A673 (cell line): ENCODE measurements at regions of chr14 and their contacts with region 1.

Region 1: GRCh38 chr14:95265106-95266094 is 54.3 kb downstream of the CLMN start:
- DNase-seq: peak; percentile 95
- H3K4me3 ChIP-seq: peak overlapping the region; percentile 9
- H3K27ac ChIP-seq: peak overlapping the region; percentile 88
- H3K4me1 ChIP-seq: peaks cover 52% of the 10 kb centered on the region
- H3K27me3 ChIP-seq: no peaks in the 10 kb centered on the region
- CTCF ChIP-seq: no peak

Region 2: DNA sequence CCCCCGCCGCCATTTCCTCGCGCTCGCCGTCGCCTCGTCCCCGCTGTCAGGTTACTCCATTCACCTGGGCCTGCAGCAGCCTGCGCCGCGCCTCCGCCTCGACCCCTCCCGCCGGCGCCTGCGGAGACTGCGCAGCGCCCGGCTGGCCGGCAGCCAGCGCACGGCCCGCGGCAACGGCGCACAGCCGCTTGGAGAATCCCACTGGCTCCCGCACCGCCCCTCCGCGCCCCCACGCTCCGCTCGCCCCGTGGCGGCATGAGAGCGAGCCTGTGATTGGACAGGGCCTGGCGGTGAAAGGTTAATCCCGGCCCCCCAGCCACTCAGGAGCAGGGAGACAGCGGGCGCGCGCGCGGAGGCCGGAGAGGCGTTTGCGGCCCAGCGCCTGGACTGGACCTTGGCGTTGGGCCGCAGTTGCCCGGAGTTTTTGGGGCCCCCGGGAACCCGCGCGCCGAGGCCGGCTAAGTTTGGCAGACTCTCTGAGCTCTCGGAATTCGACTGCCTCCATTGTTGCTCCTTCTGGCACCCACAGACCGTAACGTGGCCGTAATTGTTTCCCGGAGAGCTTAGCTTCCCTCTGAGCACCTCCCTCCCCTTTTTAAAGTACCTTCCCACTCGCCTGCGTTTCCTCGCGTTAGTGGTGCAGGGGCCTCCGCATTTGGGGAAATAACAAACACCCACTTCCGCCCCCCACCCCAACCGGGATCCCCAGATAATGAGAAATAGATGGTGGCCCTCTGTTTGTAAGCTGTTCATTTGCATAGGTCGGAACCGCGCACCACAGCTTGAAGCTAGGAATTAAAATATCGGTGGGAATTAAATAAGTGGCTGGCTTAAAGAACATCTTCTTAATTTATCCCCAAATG is 107.8 kb before region 1 on chr14 and contains the start of gene DICER1:
- CTCF ChIA-PET with region 1: no interaction called
- POLR2A ChIA-PET with region 1: no interaction called
- intact Hi-C with region 1: loop called (anchors 10 kb)
- DNase-seq: peak; percentile 95
- H3K4me3 ChIP-seq: peak within 1 kb of the TSS; percentile 59
- H3K27ac ChIP-seq: peak within 1 kb of the TSS; percentile 92
- H3K4me1 ChIP-seq: peaks cover 19% of the 10 kb centered on the region
- H3K27me3 ChIP-seq: no peaks in the 10 kb centered on the region
- CTCF ChIP-seq: no peak
- total RNA-seq, gene DICER1: 57.1 and 62.6 TPM in 2 replicates

Region 3: DNA sequence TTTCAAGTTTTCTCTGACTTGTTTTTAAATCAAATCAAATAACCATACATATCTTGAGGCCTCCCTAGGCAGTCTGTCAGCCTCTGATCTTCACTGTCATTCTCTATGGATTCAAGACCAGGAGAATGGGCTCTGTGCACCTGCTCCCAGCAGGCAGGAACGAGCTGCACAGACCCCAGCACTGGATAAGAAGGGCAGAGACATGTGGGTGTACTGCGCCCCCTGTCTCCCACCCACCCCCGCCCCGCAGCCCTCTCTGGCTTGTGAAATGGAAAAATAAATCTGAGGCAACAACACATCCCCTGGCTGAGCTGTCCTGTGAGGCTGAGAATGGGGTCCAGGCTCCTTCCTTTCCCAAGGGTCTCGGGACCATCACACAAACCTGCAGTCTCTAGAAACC is 28.0 kb after region 1 on chr14:
- CTCF ChIA-PET with region 1: interaction called, 12 read pairs
- POLR2A ChIA-PET with region 1: interaction called, 7 read pairs
- intact Hi-C with region 1: no loop called
- DNase-seq: no peak
- H3K4me3 ChIP-seq: no peak overlapping the region
- H3K27ac ChIP-seq: no peak overlapping the region
- H3K4me1 ChIP-seq: peaks cover 29% of the 10 kb centered on the region
- H3K27me3 ChIP-seq: no peaks in the 10 kb centered on the region
- CTCF ChIP-seq: no peak